Head of caudate nucleus (tissue), 42 donors: ENCODE measurements at regions of chr15 and their contacts with region 1.

Region 1: DNA sequence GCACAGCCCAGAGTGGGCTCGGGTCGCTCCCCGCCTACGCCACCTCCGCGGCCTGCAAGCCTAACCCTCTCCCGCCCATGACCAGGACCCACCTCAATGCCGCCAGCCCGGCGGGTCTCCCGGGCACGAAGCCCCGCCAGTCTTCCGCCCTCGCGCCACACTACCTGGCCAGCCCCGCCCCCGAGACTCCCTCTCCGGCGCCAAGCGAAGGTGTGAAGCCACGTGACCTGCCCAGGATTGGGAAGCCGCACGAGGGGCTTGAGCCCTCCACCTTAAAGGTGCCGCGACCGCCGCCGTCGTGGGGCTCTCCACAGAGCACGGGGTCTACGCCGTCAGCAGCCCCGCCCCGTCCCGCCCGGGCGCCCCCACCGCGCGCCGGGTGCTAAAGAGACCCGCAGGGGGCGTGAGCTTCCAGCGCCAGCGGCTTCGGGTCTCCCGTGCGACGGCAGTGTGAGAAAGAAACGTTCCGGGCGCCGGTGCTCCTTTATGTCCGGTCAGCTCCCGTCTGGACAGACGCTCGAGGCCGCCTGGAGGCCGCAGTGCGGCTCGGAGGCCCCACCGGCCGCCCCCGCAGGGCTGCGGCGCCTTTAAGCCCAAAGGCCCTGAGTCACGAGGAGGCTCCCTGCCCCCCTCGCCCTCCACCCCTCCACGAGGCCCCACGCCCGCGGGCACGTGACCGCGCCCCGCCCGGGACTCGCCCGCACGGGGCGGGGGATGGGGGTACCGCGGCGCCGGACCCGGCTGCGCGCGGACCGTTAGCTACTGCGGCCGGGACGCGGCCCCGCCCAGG is at the start of gene CPEB1:
- DNase-seq: peak; percentile 44 to 92 (median 79)

Region 2: GRCh38 chr15:82540055-82540983 is 106.9 kb before region 1 on chr15 and contains the start of gene RPS17:
- intact Hi-C with region 1: loop called (anchors 5 kb)
- DNase-seq: peak; percentile 86 to 98 (median 96)

Region 3: DNA sequence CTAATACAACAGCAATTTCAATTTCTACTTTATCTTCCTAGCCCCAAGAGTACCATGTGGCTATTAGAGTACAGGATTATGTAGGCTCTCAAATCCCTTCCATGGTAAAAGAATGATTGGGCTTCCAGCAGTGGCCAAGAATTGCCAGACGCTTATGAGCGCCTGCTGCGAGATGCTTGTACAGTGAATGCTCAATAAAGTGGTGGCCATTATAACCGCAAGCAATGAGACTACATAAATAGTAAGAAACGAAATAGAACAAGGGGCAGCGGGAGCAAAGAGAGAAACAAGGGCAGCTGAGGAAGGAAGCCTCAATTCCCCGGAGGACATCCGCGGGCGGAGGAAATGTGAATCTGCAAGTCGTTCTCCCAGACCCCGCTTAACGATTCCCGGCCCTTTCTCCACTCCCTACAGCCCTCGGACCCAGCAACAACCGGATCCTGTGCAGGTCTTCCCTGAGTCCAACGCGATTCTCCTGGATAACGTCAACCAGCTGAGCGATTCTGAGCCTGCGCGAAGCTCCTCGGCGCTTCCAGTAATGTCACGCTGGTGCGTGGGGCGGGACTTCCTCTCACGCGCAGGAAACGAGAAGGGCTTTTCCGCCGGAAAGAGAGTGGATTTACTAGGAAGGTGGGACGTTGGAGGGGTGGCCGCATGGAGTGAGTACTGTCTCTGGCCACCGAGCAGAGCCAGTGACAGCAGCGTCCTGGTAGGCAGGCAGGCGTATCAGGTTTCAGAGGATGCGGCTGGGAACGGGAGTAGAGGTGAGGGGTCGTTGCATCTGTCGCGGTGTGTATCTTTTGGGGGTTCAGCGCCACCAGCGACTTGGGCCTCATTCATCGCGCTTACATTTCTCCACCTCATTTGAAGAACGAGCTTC is 103.0 kb after region 1 on chr15:
- intact Hi-C with region 1: loop called (anchors 10 kb)
- DNase-seq: peak; percentile 89 to 98 (median 95)